CD4-positive, alpha-beta T cell (primary cell): ENCODE measurements at regions of chr2 and their contacts with region 1.

Region 1: GRCh38 chr2:41840702-41841551 is 206.9 kb upstream of the PKDCC start:
- DNase-seq: peak; percentile 96 to 99 (median 97)
- ATAC-seq: peak; percentile 97
- H3K4me3 ChIP-seq: peak overlapping the region; percentile 90
- H3K4me3 Mint-ChIP-seq: peak overlapping the region; percentile 99
- H3K27ac ChIP-seq: peak overlapping the region; percentile 76 to 87
- H3K27ac Mint-ChIP-seq: peak overlapping the region; percentile 93
- H3K4me1 ChIP-seq: peaks cover 15% of the 10 kb centered on the region
- H3K4me1 Mint-ChIP-seq: peaks cover 17% of the 10 kb centered on the region
- H3K27me3 ChIP-seq: peaks cover 6 to 21% of the 10 kb centered on the region in 2 experiments
- H3K27me3 Mint-ChIP-seq: peaks cover 48% of the 10 kb centered on the region
- CTCF ChIP-seq: peak; percentile 95

Region 2: GRCh38 chr2:41764930-41765329 is 76.0 kb before region 1 on chr2:
- CTCF ChIA-PET with region 1: no interaction called
- POLR2A ChIA-PET with region 1: no interaction called
- intact Hi-C with region 1: no loop called
- DNase-seq: no peak
- ATAC-seq: no peak
- H3K4me3 ChIP-seq: no peak overlapping the region
- H3K4me3 Mint-ChIP-seq: no peak overlapping the region
- H3K27ac ChIP-seq: no peak overlapping the region
- H3K27ac Mint-ChIP-seq: no peak overlapping the region
- H3K4me1 ChIP-seq: no peaks in the 10 kb centered on the region
- H3K4me1 Mint-ChIP-seq: no peaks in the 10 kb centered on the region
- H3K27me3 ChIP-seq: peaks cover 0 to 8% of the 10 kb centered on the region in 2 experiments
- H3K27me3 Mint-ChIP-seq: peaks cover 15% of the 10 kb centered on the region
- CTCF ChIP-seq: no peak

Region 3: GRCh38 chr2:42086500-42086953 is 245.6 kb after region 1 on chr2:
- CTCF ChIA-PET with region 1: interaction called, 3 read pairs
- POLR2A ChIA-PET with region 1: interaction called, 11 read pairs
- intact Hi-C with region 1: loop called (anchors 1 to 2 kb)
- DNase-seq: peak in 5 of 14 experiments; percentile 19 to 77 (median 63)
- ATAC-seq: peak; percentile 69
- H3K4me3 ChIP-seq: no peak overlapping the region
- H3K4me3 Mint-ChIP-seq: no peak overlapping the region
- H3K27ac ChIP-seq: no peak overlapping the region
- H3K27ac Mint-ChIP-seq: no peak overlapping the region
- H3K4me1 ChIP-seq: peaks cover 8% of the 10 kb centered on the region
- H3K4me1 Mint-ChIP-seq: peaks cover 4% of the 10 kb centered on the region
- H3K27me3 ChIP-seq: no peaks in the 10 kb centered on the region
- H3K27me3 Mint-ChIP-seq: peaks cover 8% of the 10 kb centered on the region
- CTCF ChIP-seq: peak; percentile 77

Region 4: GRCh38 chr2:42360890-42361727 is 520.2 kb after region 1 on chr2 and contains the start of gene COX7A2L:
- CTCF ChIA-PET with region 1: no interaction called
- POLR2A ChIA-PET with region 1: no interaction called
- intact Hi-C with region 1: loop called in 1 of 2 experiments (anchors 2 kb)
- DNase-seq: peak; percentile 93 to 98 (median 96)
- ATAC-seq: peak; percentile 91
- H3K4me3 ChIP-seq: peak within 1 kb of the TSS; percentile 88
- H3K4me3 Mint-ChIP-seq: peak within 1 kb of the TSS; percentile 88
- H3K27ac ChIP-seq: peak within 1 kb of the TSS; percentile 91 to 96
- H3K27ac Mint-ChIP-seq: peak within 1 kb of the TSS; percentile 99
- H3K4me1 ChIP-seq: peaks cover 34% of the 10 kb centered on the region
- H3K4me1 Mint-ChIP-seq: peaks cover 45% of the 10 kb centered on the region
- H3K27me3 ChIP-seq: no peaks in the 10 kb centered on the region
- H3K27me3 Mint-ChIP-seq: no peaks in the 10 kb centered on the region
- CTCF ChIP-seq: no peak
- total RNA-seq, gene COX7A2L: 51.3 to 57.3 TPM

Region 5: GRCh38 chr2:42494355-42495233 is 653.7 kb after region 1 on chr2:
- CTCF ChIA-PET with region 1: no interaction called
- POLR2A ChIA-PET with region 1: no interaction called
- intact Hi-C with region 1: loop called in 1 of 2 experiments (anchors 10 kb)
- DNase-seq: peak; percentile 52 to 84 (median 68)
- ATAC-seq: peak; percentile 47
- H3K4me3 ChIP-seq: peak overlapping the region; percentile 56
- H3K4me3 Mint-ChIP-seq: peak overlapping the region; percentile 96
- H3K27ac ChIP-seq: no peak overlapping the region
- H3K27ac Mint-ChIP-seq: peak overlapping the region; percentile 68
- H3K4me1 ChIP-seq: peaks cover 17% of the 10 kb centered on the region
- H3K4me1 Mint-ChIP-seq: peaks cover 8% of the 10 kb centered on the region
- H3K27me3 ChIP-seq: peaks cover 0 to 6% of the 10 kb centered on the region in 2 experiments
- H3K27me3 Mint-ChIP-seq: no peaks in the 10 kb centered on the region
- CTCF ChIP-seq: peak; percentile 90

Region 6: DNA sequence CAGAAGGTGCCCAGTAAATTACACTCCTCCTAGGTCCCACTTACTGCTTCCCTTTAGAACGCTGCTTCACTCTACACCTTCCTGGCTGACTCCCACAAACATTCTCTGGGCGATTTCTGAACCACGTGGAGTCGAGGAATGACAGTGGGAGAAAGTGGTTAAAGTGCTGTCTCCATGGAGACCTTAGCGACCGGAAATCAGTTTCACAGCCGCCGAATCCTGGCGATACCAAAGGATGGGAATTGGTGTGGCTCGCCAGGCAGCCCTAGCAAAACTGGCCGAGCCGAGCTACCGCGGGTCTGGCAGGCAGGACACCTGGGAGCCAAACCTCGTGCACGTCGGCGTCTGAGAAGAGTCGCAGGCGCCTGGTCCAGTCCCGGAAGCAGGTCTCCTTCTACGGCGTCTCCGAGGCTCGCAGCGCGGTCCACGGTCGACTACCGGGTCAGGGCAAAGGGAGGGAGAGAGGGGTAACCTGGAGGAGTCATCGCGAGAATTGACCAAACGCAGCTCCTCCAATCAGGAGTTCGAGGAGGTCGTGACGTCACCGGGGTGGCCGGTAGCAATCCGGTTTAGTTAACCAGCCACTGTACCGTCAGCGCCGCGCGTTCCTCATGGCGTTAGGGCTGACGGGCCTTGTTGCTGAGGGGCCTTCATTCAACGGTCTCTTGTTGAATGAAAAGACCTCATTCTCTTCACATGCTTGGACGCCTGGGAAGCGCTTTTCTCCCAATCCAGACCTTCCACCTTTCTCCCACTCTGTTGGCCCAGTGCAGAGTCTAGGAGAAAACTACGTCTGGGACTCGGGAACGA is 1754.9 kb after region 1 on chr2 and contains the start of gene THADA:
- CTCF ChIA-PET with region 1: no interaction called
- POLR2A ChIA-PET with region 1: no interaction called
- intact Hi-C with region 1: loop called in 1 of 2 experiments (anchors 10 kb)
- DNase-seq: peak; percentile 90 to 98 (median 94)
- ATAC-seq: peak; percentile 90
- H3K4me3 ChIP-seq: peak within 1 kb of the TSS; percentile 84
- H3K4me3 Mint-ChIP-seq: peak within 1 kb of the TSS; percentile 97
- H3K27ac ChIP-seq: peak within 1 kb of the TSS; percentile 68 to 96
- H3K27ac Mint-ChIP-seq: peak within 1 kb of the TSS; percentile 93
- H3K4me1 ChIP-seq: peaks cover 21% of the 10 kb centered on the region
- H3K4me1 Mint-ChIP-seq: peaks cover 35% of the 10 kb centered on the region
- H3K27me3 ChIP-seq: no peaks in the 10 kb centered on the region
- H3K27me3 Mint-ChIP-seq: no peaks in the 10 kb centered on the region
- CTCF ChIP-seq: no peak
- total RNA-seq, gene THADA: 29.3 to 32.9 TPM